ENCODE measurements at regions of chr10 and their contacts with region 1.

Region 1: GRCh38 chr10:116287906-116288501 is 15.0 kb upstream of the GFRA1 start:
- DNase-seq: peak; percentile 22
- H3K4me3 ChIP-seq: no peak overlapping the region
- H3K27ac ChIP-seq: no peak overlapping the region
- H3K4me1 ChIP-seq: no peaks in the 10 kb centered on the region
- H3K27me3 ChIP-seq: no peaks in the 10 kb centered on the region
- CTCF ChIP-seq: peak; percentile 40

Region 2: DNA sequence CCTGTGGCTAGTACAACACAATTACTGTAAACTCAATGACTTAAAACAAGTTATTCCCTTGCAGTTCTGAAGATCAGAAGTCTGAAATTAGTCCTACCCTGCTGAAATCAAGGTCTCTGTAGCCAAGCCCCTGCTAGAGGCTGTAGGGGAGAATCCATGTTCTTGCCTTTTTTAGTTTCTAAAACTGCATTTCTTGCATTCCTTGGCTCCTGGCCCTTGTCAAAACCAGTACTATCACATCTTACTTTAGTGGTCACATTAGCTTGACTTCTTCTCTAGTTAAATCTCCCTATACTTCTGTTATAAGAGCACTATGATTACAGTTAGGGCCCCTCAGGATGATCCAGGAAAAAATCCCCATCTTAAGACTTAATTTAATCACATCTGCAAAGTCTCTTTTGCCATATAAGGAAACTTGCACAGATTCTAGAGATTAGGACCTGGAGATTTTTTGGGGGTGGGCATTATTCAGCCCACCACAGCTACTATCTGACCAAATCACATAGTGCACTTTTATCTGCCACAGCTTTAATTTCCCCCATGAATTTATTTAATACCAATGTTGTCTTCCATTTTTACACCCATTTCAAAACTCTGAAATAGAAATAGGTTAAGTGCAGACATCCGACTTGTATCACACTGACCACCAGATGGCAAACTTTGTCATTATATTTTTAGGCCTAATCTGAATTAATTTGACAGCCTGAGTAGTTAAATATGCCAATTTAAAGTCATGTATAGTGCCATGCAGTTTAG is 581.8 kb before region 1 on chr10:
- intact Hi-C with region 1: loop called (anchors 5 kb)
- DNase-seq: no peak
- H3K4me3 ChIP-seq: no peak overlapping the region
- H3K27ac ChIP-seq: no peak overlapping the region
- H3K4me1 ChIP-seq: no peaks in the 10 kb centered on the region
- H3K27me3 ChIP-seq: no peaks in the 10 kb centered on the region
- CTCF ChIP-seq: no peak

Region 3: DNA sequence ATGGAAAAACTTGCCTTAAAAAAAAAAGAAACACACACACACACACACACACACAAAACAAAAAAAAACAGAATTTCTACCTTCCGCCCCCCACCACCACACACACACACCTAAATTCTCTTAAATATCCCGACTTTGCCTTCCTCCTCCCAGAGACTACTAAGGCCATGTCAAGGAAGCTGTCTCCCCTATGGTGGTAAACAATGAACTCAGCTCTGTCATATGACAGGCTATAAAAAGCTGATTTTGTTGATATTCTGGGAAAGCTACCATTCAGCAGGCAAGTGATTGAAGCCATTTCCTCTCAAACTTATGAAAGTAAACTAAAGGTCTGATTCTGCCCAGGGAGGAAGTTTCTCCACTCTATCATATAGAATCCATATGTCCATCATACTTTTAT is 486.0 kb before region 1 on chr10:
- intact Hi-C with region 1: loop called (anchors 5 kb)
- DNase-seq: no peak
- H3K4me3 ChIP-seq: no peak overlapping the region
- H3K27ac ChIP-seq: no peak overlapping the region
- H3K4me1 ChIP-seq: no peaks in the 10 kb centered on the region
- H3K27me3 ChIP-seq: no peaks in the 10 kb centered on the region
- CTCF ChIP-seq: no peak

Measured in colonic mucosa (tissue), 4 donors.